CD8-positive, alpha-beta T cell (primary cell): ENCODE measurements at regions of chr11 and their contacts with region 1.

Region 1: GRCh38 chr11:63838678-63839507 is at the start of gene MARK2:
- DNase-seq: peak; percentile 98 to 100 (median 100)
- ATAC-seq: peak; percentile 83
- H3K4me3 ChIP-seq: peak within 1 kb of the TSS; percentile 76 to 93
- H3K4me3 Mint-ChIP-seq: peak within 1 kb of the TSS; percentile 91
- H3K27ac ChIP-seq: peak within 1 kb of the TSS; percentile 75 to 77
- H3K27ac Mint-ChIP-seq: peak within 1 kb of the TSS; percentile 86
- H3K4me1 ChIP-seq: peaks cover 40% of the 10 kb centered on the region
- H3K4me1 Mint-ChIP-seq: peaks cover 55% of the 10 kb centered on the region
- H3K27me3 ChIP-seq: no peaks in the 10 kb centered on the region
- H3K27me3 Mint-ChIP-seq: no peaks in the 10 kb centered on the region
- CTCF ChIP-seq: no peak
- total RNA-seq, gene MARK2: 16.9 to 19.1 TPM

Region 2: GRCh38 chr11:63635762-63636465 is 203.0 kb before region 1 on chr11:
- CTCF ChIA-PET with region 1: no interaction called
- POLR2A ChIA-PET with region 1: no interaction called
- intact Hi-C with region 1: no loop called
- DNase-seq: peak; percentile 60 to 82 (median 75)
- ATAC-seq: peak; percentile 89
- H3K4me3 ChIP-seq: no peak overlapping the region
- H3K4me3 Mint-ChIP-seq: no peak overlapping the region
- H3K27ac ChIP-seq: no peak overlapping the region
- H3K27ac Mint-ChIP-seq: no peak overlapping the region
- H3K4me1 ChIP-seq: no peaks in the 10 kb centered on the region
- H3K4me1 Mint-ChIP-seq: peaks cover 8% of the 10 kb centered on the region
- H3K27me3 ChIP-seq: no peaks in the 10 kb centered on the region
- H3K27me3 Mint-ChIP-seq: no peaks in the 10 kb centered on the region
- CTCF ChIP-seq: peak; percentile 93

Region 3: DNA sequence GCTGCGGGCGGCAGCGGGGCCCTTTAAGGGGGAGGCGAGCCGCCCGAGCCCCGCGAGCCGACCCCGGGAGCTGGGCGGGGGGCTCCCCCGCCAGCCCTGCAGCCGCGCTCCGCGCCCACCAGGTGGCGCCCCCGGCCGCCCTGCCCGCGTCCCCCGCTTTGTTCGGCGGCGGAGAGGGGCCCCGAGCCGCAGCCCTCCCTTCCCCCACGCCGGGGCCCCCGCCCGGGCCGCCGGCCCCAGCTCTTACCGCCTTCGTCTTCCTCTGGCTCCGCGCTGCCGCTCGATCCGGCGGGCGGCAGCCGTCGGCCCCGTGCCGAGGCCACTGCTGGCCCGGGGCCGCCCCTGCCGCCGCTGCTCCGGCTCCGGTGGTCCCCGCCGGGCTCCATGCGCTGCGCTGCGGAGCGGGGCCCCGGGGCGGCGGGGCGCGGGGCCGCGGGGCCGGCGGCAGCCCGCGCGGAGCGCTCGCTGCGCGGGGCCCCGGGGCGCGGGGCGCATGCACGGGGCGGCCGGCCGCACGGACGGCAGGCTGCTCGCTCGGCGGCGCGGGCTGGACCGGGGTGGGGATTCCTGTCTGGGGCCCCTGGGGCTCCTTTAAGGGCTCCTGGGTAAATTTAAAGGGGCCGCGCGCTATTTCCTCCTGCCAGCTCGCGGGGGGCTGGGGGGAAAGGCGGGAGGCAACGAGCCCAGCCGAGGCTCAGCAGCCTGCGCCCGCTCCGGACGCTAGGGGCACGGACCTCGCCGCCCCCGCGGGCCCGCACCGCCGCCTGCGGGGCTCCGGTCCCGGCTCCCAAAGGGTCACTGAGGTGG is 70.5 kb before region 1 on chr11 and contains the start of gene ZFTA:
- CTCF ChIA-PET with region 1: interaction called, 26 read pairs
- POLR2A ChIA-PET with region 1: interaction called, 5 read pairs
- intact Hi-C with region 1: loop called in 1 of 2 experiments (anchors 1 kb)
- DNase-seq: peak; percentile 33 to 81 (median 64)
- ATAC-seq: peak; percentile 76
- H3K4me3 ChIP-seq: peak within 1 kb of the TSS; percentile 69 to 85
- H3K4me3 Mint-ChIP-seq: peak within 1 kb of the TSS; percentile 94
- H3K27ac ChIP-seq: peak within 1 kb of the TSS in 1 of 2 experiments; percentile 13
- H3K27ac Mint-ChIP-seq: peak within 1 kb of the TSS; percentile 86
- H3K4me1 ChIP-seq: peaks cover 15% of the 10 kb centered on the region
- H3K4me1 Mint-ChIP-seq: peaks cover 16% of the 10 kb centered on the region
- H3K27me3 ChIP-seq: peaks cover 0 to 3% of the 10 kb centered on the region in 2 experiments
- H3K27me3 Mint-ChIP-seq: no peaks in the 10 kb centered on the region
- CTCF ChIP-seq: peak; percentile 52
- total RNA-seq, gene ZFTA: 3.2 to 5.7 TPM

Region 4: DNA sequence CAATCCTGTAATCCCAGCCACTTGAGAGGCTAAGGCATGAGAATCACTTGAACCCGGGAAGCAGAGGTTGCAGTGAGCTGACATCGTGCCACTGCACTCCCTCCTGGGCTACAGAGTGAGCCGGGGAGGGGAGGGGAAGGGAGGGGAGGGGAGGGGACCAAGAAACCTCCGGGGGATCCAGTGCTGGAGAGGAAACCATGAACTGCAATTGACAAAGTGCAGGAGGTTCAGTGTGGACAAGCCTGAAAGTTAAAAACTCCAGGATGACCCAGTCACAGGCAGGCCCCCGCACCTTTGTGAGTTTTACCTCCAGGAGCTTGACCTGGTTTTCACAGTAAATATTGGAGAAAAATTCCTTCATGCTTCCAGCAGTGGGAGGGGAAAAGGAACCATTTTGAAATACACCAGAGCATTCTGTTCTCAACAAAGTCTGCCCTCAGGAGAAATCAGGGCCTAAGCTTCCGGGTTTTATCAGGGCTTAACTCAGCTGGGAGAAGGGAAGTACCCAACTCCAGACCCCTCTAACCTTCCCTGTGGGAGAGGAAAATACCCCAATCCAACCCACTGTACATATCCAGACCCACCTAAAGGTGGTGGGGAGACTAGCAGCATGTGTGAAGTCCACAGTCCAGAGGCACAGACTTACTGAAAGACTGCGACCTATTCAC is 54.8 kb before region 1 on chr11:
- CTCF ChIA-PET with region 1: no interaction called
- POLR2A ChIA-PET with region 1: no interaction called
- intact Hi-C with region 1: no loop called
- DNase-seq: no peak
- ATAC-seq: no peak
- H3K4me3 ChIP-seq: no peak overlapping the region
- H3K4me3 Mint-ChIP-seq: no peak overlapping the region
- H3K27ac ChIP-seq: no peak overlapping the region
- H3K27ac Mint-ChIP-seq: no peak overlapping the region
- H3K4me1 ChIP-seq: no peaks in the 10 kb centered on the region
- H3K4me1 Mint-ChIP-seq: peaks cover 7% of the 10 kb centered on the region
- H3K27me3 ChIP-seq: no peaks in the 10 kb centered on the region
- H3K27me3 Mint-ChIP-seq: peaks cover 4% of the 10 kb centered on the region
- CTCF ChIP-seq: no peak

Region 5: GRCh38 chr11:63871962-63872799 is 33.3 kb after region 1 on chr11:
- CTCF ChIA-PET with region 1: interaction called, 92 read pairs
- POLR2A ChIA-PET with region 1: interaction called, 6 read pairs
- intact Hi-C with region 1: loop called in 1 of 2 experiments (anchors 2 kb)
- DNase-seq: peak in 7 of 9 experiments; percentile 9 to 71 (median 44)
- ATAC-seq: peak; percentile 80
- H3K4me3 ChIP-seq: no peak overlapping the region
- H3K4me3 Mint-ChIP-seq: peak overlapping the region; percentile 29
- H3K27ac ChIP-seq: peak overlapping the region in 1 of 2 experiments; percentile 51
- H3K27ac Mint-ChIP-seq: peak overlapping the region; percentile 72
- H3K4me1 ChIP-seq: peaks cover 77% of the 10 kb centered on the region
- H3K4me1 Mint-ChIP-seq: peaks cover 83% of the 10 kb centered on the region
- H3K27me3 ChIP-seq: no peaks in the 10 kb centered on the region
- H3K27me3 Mint-ChIP-seq: no peaks in the 10 kb centered on the region
- CTCF ChIP-seq: no peak

Region 6: DNA sequence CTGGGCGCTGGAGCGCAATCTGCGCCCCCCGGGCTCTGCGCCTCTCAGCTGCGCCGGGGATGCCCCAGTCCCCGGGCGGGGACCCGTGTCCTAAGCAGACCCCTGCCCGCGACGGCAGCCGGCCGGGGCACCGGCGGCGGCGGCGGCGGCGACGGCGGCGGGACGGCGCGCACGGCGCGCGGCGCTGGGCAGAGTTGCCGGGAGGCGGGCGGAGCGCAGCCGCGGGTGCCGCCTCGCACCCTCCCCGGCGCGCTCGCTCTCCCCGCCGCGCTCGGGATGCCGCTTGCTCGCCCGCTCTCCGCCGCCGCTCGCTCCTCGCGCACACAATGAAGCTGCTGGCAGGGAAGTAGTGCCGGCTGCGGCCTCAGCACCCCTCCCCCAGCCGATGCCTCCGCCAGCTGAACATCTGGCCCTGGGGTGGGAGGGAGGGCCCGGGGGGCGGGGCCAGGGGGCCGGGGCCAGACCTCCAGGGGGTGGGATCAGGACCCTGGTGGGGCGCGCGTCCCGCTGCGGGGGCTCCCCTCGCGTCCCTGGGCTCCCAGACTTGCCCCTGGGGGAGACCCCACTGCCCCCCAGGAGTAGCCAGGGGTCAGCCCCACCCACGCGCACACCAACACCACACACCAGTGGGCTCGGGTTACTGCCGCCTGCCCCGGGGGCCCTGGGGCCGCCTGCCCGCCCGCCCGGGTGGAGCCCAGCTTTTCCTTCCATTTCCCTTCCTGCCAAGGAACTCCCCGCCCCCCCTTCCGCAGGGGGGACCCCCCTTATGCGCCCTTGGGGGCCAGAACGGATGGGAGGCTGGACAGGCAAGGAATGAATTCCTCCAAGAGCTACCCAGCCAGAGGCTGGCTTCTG is 78.2 kb after region 1 on chr11 and contains the start of gene RCOR2:
- CTCF ChIA-PET with region 1: interaction called, 53 read pairs
- POLR2A ChIA-PET with region 1: interaction called, 5 read pairs
- intact Hi-C with region 1: loop called in 1 of 2 experiments (anchors 1 kb)
- DNase-seq: peak in 8 of 9 experiments; percentile 32 to 78 (median 58)
- ATAC-seq: peak; percentile 65
- H3K4me3 ChIP-seq: peak within 1 kb of the TSS; percentile 47 to 48
- H3K4me3 Mint-ChIP-seq: peak within 1 kb of the TSS; percentile 85
- H3K27ac ChIP-seq: no peak within 1 kb of the TSS
- H3K27ac Mint-ChIP-seq: no peak within 1 kb of the TSS
- H3K4me1 ChIP-seq: peaks cover 28% of the 10 kb centered on the region
- H3K4me1 Mint-ChIP-seq: peaks cover 15% of the 10 kb centered on the region
- H3K27me3 ChIP-seq: no peaks in the 10 kb centered on the region
- H3K27me3 Mint-ChIP-seq: no peaks in the 10 kb centered on the region
- CTCF ChIP-seq: no peak
- total RNA-seq, gene RCOR2: not detected

Region 7: DNA sequence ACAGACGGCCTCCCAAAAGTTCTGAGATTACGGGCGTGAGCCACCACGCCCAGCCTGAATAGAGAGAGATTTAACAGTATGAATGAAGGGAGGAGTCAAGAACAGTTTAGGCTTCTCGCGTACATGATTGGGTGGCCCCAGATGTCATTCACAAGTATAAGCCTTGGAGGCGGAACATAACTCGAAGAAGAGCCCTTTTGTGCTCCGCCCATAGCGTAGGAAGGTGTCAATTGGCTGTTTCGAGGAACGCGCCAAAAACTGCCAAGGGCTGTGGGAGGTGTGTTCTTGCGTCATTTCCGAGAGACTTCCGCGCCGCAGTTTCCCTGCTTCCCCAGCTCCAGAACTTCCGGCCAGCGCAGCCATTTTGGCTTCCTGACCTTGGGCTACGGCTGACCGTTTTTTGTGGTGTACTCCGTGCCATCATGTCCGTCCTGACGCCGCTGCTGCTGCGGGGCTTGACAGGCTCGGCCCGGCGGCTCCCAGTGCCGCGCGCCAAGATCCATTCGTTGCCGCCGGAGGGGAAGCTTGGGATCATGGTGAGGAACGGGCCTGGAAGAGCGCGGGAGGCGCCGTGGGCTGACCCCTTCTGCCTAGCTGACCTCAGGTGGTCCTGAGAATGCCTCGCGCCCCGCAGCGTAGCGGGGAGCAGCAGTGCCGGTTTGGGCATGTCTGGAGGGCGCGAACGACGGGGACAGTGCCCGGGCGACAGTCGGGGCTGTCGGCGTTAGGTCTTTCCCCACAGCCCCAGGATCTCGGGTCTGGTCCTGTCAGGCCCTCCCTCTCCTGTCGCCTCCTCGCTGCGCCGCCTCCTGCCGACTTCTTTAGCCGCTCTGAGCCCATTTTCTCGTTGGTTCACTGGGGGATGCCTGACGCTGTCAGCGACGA is 135.6 kb after region 1 on chr11 and contains the start of gene COX8A:
- CTCF ChIA-PET with region 1: interaction called, 9 read pairs
- POLR2A ChIA-PET with region 1: interaction called, 3 read pairs
- intact Hi-C with region 1: loop called (anchors 1 kb)
- DNase-seq: peak; percentile 89 to 100 (median 90)
- ATAC-seq: peak; percentile 99
- H3K4me3 ChIP-seq: peak within 1 kb of the TSS; percentile 97 to 99
- H3K4me3 Mint-ChIP-seq: peak within 1 kb of the TSS; percentile 100
- H3K27ac ChIP-seq: peak within 1 kb of the TSS; percentile 86 to 97
- H3K27ac Mint-ChIP-seq: peak within 1 kb of the TSS; percentile 99
- H3K4me1 ChIP-seq: peaks cover 16% of the 10 kb centered on the region
- H3K4me1 Mint-ChIP-seq: peaks cover 30% of the 10 kb centered on the region
- H3K27me3 ChIP-seq: no peaks in the 10 kb centered on the region
- H3K27me3 Mint-ChIP-seq: peaks cover 3% of the 10 kb centered on the region
- CTCF ChIP-seq: no peak
- total RNA-seq, gene COX8A: 97.6 to 111 TPM

Region 8: DNA sequence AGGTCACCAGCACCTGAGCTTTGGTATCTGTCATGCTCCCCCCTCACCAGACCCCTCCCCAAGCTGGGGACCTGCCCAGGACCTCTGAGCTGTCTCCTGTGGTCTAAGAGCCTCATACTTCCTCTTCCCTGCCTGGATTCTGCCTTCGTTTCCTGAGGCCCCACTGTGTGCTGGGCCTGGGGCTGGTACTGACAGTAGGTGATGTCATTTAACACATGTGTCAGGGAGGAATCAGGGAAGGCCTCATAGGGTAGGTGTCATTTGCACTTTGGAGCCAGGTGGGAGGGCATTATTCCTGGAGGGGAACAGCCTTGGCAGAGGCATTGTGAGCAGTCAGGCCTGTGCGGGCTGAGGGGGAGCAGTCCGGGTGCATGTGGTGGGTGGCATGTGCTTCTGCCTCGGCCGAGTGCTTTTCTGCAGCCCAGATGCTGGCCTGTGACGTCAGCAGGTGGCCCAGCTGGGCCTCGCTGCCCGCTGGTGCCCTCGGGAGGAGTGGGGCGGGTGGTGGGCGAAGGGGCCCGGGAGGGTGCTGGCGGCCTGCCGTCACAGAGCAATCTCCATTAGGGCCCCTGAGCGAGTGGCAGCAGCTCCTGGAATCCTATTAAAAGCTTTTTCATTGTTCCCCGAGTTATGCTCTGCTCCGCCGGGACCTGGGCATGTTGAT is 206.0 kb after region 1 on chr11:
- CTCF ChIA-PET with region 1: no interaction called
- POLR2A ChIA-PET with region 1: no interaction called
- intact Hi-C with region 1: no loop called
- DNase-seq: no peak
- ATAC-seq: no peak
- H3K4me3 ChIP-seq: no peak overlapping the region
- H3K4me3 Mint-ChIP-seq: no peak overlapping the region
- H3K27ac ChIP-seq: no peak overlapping the region
- H3K27ac Mint-ChIP-seq: no peak overlapping the region
- H3K4me1 ChIP-seq: no peaks in the 10 kb centered on the region
- H3K4me1 Mint-ChIP-seq: no peaks in the 10 kb centered on the region
- H3K27me3 ChIP-seq: no peaks in the 10 kb centered on the region
- H3K27me3 Mint-ChIP-seq: peaks cover 6% of the 10 kb centered on the region
- CTCF ChIP-seq: no peak

Region 9: DNA sequence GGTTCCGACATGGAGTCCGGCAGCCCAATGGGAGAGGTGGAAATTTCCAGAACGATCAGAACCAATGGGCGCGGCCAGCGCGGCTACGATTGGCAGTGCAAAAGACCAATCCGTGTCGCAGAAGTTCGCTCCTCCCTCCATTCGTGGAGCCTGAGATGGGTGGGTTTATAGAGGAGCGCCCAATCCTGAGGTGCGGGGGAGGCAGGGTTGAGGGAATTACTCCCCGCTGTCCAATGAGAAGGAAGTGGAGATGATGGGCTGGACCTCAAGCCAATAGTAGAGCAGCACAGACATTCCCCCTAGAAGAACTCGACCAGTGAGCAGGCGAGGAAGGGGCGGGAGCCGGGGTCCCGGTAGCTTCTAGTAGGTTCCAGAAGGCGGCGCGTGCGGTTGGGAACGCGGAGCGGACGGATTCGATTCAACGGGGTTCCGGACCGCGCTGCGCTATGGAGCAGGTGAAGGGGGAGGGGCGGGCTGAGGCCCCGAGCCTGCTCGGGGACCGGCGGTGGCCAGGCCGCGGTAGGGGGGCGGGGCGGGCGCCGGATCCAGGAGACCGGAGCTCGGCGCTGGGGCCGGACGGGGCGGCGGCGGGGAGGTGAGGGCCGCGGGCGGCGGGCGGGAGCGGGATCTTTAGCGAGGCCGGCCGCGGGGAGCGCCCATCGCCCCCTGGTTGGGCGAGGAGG is 347.1 kb after region 1 on chr11 and contains the start of gene STIP1:
- CTCF ChIA-PET with region 1: interaction called, 4 read pairs
- POLR2A ChIA-PET with region 1: no interaction called
- intact Hi-C with region 1: loop called in 1 of 2 experiments (anchors 1 kb)
- DNase-seq: peak; percentile 96 to 100 (median 98)
- ATAC-seq: peak; percentile 87
- H3K4me3 ChIP-seq: peak within 1 kb of the TSS; percentile 79 to 88
- H3K4me3 Mint-ChIP-seq: peak within 1 kb of the TSS; percentile 96
- H3K27ac ChIP-seq: peak within 1 kb of the TSS; percentile 57 to 85
- H3K27ac Mint-ChIP-seq: peak within 1 kb of the TSS; percentile 97
- H3K4me1 ChIP-seq: peaks cover 39% of the 10 kb centered on the region
- H3K4me1 Mint-ChIP-seq: peaks cover 43% of the 10 kb centered on the region
- H3K27me3 ChIP-seq: no peaks in the 10 kb centered on the region
- H3K27me3 Mint-ChIP-seq: no peaks in the 10 kb centered on the region
- CTCF ChIP-seq: peak; percentile 36
- total RNA-seq, gene STIP1: 37.0 to 37.7 TPM

Region 10: GRCh38 chr11:65013692-65014145 is 1174.8 kb after region 1 on chr11:
- CTCF ChIA-PET with region 1: no interaction called
- POLR2A ChIA-PET with region 1: no interaction called
- intact Hi-C with region 1: no loop called
- DNase-seq: peak; percentile 74 to 95 (median 89)
- ATAC-seq: peak; percentile 91
- H3K4me3 ChIP-seq: peak overlapping the region; percentile 73 to 94
- H3K4me3 Mint-ChIP-seq: peak overlapping the region; percentile 88
- H3K27ac ChIP-seq: peak overlapping the region; percentile 87 to 100
- H3K27ac Mint-ChIP-seq: peak overlapping the region; percentile 96
- H3K4me1 ChIP-seq: peaks cover 24% of the 10 kb centered on the region
- H3K4me1 Mint-ChIP-seq: peaks cover 24% of the 10 kb centered on the region
- H3K27me3 ChIP-seq: no peaks in the 10 kb centered on the region
- H3K27me3 Mint-ChIP-seq: no peaks in the 10 kb centered on the region
- CTCF ChIP-seq: peak; percentile 58